Heart right ventricle (tissue), 16 donors: ENCODE measurements at regions of chr22 and their contacts with region 1.

Region 1: DNA sequence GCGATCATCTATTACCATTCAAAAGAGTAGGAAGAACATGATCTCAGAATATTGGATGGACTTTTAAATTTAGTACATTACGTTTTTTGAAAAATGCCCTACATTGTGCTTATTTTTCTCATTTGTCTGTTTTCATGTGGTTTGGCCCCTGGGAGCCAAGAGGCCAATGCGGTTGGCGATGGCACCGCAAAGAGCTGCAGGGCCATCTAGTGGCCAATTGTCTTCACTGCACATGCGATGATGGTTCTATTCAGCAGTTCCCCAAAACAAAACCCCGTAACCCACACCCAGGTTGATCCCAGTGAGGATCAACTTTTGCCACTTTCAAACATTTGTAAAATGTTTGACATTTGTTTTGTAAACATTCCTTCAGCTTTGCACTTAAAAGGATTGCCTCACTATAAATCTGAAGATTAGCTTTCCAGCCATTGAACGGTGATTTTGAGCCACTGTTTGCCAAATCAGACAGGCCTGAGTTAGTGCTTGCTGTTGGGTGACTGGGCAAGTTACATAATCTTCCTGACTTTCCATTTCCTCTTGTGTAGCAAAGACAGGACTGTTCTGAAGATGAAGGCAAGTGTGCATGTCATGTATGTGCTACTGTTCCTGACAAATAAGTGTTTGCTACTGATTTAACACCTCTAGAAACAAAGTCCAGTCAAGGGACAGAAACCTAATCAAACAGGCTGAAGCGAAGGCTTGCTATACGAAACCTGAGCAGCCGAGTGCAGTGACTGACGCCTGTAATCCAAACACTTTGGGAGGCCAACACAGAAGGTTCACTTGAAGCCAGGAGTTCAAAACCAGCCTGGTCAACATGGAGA is 29.2 kb upstream of the XBP1 start:
- DNase-seq: peak; percentile 67 to 74
- ATAC-seq: peak; percentile 78 to 93 (median 88)
- H3K4me3 ChIP-seq: no peak overlapping the region
- H3K27ac ChIP-seq: peak overlapping the region in 1 of 10 donors; percentile 29
- H3K4me1 ChIP-seq: peaks cover 0 to 12% (median 0%) of the 10 kb centered on the region in 9 donors
- H3K27me3 ChIP-seq: no peaks in the 10 kb centered on the region
- CTCF ChIP-seq: peak; percentile 97 to 99 (median 98)

Region 2: GRCh38 chr22:28019881-28020871 is 809.4 kb before region 1 on chr22:
- intact Hi-C with region 1: loop called in 2 of 10 experiments (anchors 10 kb)
- DNase-seq: peak; percentile 74 to 78
- ATAC-seq: peak; percentile 69 to 83 (median 74)
- H3K4me3 ChIP-seq: no peak overlapping the region
- H3K27ac ChIP-seq: peak overlapping the region in 1 of 10 donors; percentile 1
- H3K4me1 ChIP-seq: peaks cover 6 to 58% (median 23%) of the 10 kb centered on the region in 9 donors
- H3K27me3 ChIP-seq: no peaks in the 10 kb centered on the region
- CTCF ChIP-seq: peak; percentile 85 to 98 (median 96)

Region 3: GRCh38 chr22:28043266-28043665 is 786.3 kb before region 1 on chr22:
- intact Hi-C with region 1: loop called in 1 of 10 experiments (anchors 10 kb)
- DNase-seq: no peak
- ATAC-seq: peak in 5 of 8 donors; percentile 30 to 59 (median 44)
- H3K4me3 ChIP-seq: no peak overlapping the region
- H3K27ac ChIP-seq: peak overlapping the region in 1 of 10 donors; percentile 0
- H3K4me1 ChIP-seq: peaks cover 0 to 23% (median 6%) of the 10 kb centered on the region in 9 donors
- H3K27me3 ChIP-seq: no peaks in the 10 kb centered on the region
- CTCF ChIP-seq: no peak

Region 4: GRCh38 chr22:28600546-28601143 is 228.9 kb before region 1 on chr22:
- intact Hi-C with region 1: loop called (anchors 1 to 5 kb)
- DNase-seq: peak in 1 of 2 donors; percentile 17
- ATAC-seq: peak in 4 of 8 donors; percentile 28 to 39 (median 34)
- H3K4me3 ChIP-seq: no peak overlapping the region
- H3K27ac ChIP-seq: no peak overlapping the region
- H3K4me1 ChIP-seq: no peaks in the 10 kb centered on the region
- H3K27me3 ChIP-seq: no peaks in the 10 kb centered on the region
- CTCF ChIP-seq: peak in 8 of 9 donors; percentile 36 to 78 (median 62)

Region 5: GRCh38 chr22:28791841-28792490 is 37.6 kb before region 1 on chr22:
- intact Hi-C with region 1: loop called in 1 of 10 experiments (anchors 5 kb)
- DNase-seq: no peak
- ATAC-seq: no peak
- H3K4me3 ChIP-seq: no peak overlapping the region
- H3K27ac ChIP-seq: peak overlapping the region in 1 of 10 donors; percentile 32
- H3K4me1 ChIP-seq: peaks cover 3 to 54% (median 26%) of the 10 kb centered on the region in 9 donors
- H3K27me3 ChIP-seq: no peaks in the 10 kb centered on the region
- CTCF ChIP-seq: no peak

Region 6: GRCh38 chr22:29072193-29072978 is 242.8 kb after region 1 on chr22:
- intact Hi-C with region 1: no loop called
- DNase-seq: peak; percentile 82 to 88
- ATAC-seq: peak; percentile 90 to 96 (median 92)
- H3K4me3 ChIP-seq: peak overlapping the region in 9 of 10 donors; percentile 41 to 86 (median 73)
- H3K27ac ChIP-seq: peak overlapping the region in 1 of 10 donors; percentile 21
- H3K4me1 ChIP-seq: peaks cover 4 to 45% (median 29%) of the 10 kb centered on the region in 9 donors
- H3K27me3 ChIP-seq: peaks cover 0 to 72% (median 0%) of the 10 kb centered on the region in 7 donors
- CTCF ChIP-seq: no peak